Gastrocnemius medialis (tissue), 4 donors: ENCODE measurements at regions of chr19 and their contacts with region 1.

Region 1: GRCh38 chr19:51926784-51927742 is at the start of gene ZNF613:
- DNase-seq: peak; percentile 78 to 83
- ATAC-seq: peak; percentile 95
- H3K4me3 ChIP-seq: peak within 1 kb of the TSS; percentile 73 to 95 (median 88)
- H3K27ac ChIP-seq: peak within 1 kb of the TSS; percentile 76 to 91 (median 86)
- H3K4me1 ChIP-seq: peaks cover 5 to 11% of the 10 kb centered on the region in 2 donors
- H3K27me3 ChIP-seq: no peaks in the 10 kb centered on the region
- CTCF ChIP-seq: peak in 2 of 5 experiments; percentile 35
- POLR2A ChIP-seq: no peak
- total RNA-seq, gene ZNF613: 1.3 to 9.4 (median 3.8) TPM

Region 2: GRCh38 chr19:51887522-51888498 is 39.3 kb before region 1 on chr19 and contains the start of gene ZNF577:
- in situ Hi-C with region 1: no loop called
- intact Hi-C with region 1: loop called (anchors 1 kb)
- DNase-seq: peak; percentile 81 to 86
- ATAC-seq: peak; percentile 98
- H3K4me3 ChIP-seq: peak within 1 kb of the TSS; percentile 59 to 95 (median 84)
- H3K27ac ChIP-seq: peak within 1 kb of the TSS; percentile 70 to 87 (median 82)
- H3K4me1 ChIP-seq: peaks cover 4 to 9% of the 10 kb centered on the region in 2 donors
- H3K27me3 ChIP-seq: no peaks in the 10 kb centered on the region
- CTCF ChIP-seq: peak in 1 of 5 experiments; percentile 20
- POLR2A ChIP-seq: no peak
- total RNA-seq, gene ZNF577: 2.0 to 8.4 (median 4.5) TPM

Region 3: DNA sequence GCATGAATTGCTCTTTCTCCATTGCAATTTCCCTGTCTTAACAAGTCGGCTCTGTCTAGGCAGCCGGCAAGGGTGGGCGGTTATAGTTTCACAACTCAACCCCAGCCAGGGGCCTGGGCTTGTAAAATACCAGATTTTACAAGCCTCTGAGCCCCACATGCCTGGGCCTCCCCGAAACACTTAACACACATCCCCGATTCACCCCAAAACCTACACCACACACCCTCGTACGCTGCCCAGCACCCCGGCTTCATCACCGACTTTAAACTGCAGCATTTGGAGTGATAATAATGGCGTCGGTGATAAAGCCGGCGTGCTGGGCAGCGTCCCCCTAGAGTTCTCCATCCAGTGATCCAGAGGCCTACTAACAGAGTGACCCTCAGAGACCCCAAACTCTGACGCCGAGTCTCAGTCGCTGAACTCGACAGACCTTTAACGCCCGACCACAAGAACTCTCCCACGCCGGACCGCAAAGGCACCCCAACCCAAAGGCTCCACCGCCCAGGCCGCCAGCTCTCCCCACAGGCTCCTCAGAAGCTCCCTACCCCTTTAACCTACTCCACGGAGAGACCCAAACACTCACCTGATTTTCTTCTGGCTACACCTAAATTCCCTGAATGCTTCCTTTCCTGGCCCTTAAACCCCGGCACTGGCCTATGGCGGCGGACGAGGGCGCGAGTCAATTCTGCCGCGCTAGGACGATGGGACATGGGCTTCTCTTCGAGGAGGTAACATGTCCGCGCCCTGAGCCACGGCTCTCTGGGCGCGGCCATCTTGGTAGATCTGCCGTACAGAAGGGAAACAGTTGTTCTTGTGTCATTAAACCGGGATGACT is 22.5 kb before region 1 on chr19 and contains the start of gene ZNF649:
- in situ Hi-C with region 1: no loop called
- intact Hi-C with region 1: loop called (anchors 1 kb)
- DNase-seq: peak; percentile 59 to 79
- ATAC-seq: peak; percentile 99 to 100
- H3K4me3 ChIP-seq: peak within 1 kb of the TSS; percentile 71 to 86 (median 78)
- H3K27ac ChIP-seq: peak within 1 kb of the TSS; percentile 80 to 92 (median 85)
- H3K4me1 ChIP-seq: peaks cover 10 to 15% of the 10 kb centered on the region in 2 donors
- H3K27me3 ChIP-seq: peaks cover 0 to 9% (median 5%) of the 10 kb centered on the region in 3 donors
- CTCF ChIP-seq: no peak
- POLR2A ChIP-seq: no peak
- total RNA-seq, gene ZNF649: 2.6 to 4.7 (median 4.1) TPM

Region 4: DNA sequence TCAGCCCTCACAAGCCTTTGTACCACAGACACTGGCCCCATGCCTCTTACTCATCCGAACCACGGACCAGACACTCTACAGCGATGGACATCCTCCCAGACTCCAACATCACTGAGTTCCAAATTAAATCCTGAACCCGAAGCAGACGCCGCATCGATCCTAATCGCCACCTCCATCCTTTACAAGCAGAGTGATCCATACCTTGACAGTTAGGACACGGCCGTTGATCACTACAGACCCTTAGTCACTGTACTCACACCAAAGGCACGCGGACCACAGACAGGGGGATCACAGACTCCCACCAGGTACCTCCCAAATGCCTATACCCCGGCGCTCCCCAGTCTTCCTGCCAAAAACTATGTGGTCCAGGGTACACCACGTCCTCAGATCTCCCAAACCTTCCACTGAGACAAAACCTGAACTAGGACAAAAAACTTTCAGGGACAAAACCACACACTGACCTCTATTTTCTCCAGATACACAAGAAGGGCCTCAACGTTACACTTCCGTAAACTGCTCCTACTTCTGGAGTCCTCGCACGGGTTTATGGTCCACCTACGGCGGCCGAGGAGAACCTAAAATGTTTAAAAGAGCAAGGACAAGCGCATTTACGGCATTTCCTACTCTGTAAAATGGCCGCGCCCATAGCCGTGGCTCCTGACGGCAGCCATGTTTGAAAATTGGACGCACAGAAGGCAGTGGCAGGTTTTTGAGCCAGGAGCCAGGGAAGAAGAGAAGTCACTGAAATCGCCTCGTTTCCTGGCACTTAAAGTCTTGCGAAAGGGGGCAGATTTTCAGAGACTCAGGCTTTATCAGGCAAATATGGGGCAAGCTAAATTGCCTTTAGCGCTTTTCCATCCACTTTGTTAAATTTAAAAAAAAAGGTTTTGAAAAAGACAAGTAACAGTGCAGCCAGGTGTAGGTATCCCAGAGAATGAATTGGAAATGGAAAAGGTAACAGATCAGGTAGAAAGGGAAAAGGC is 59.5 kb after region 1 on chr19 and contains the start of gene ZNF350:
- in situ Hi-C with region 1: no loop called
- intact Hi-C with region 1: loop called (anchors 1 kb)
- DNase-seq: peak; percentile 87 to 91
- ATAC-seq: peak; percentile 100
- H3K4me3 ChIP-seq: peak within 1 kb of the TSS; percentile 69 to 92 (median 86)
- H3K27ac ChIP-seq: peak within 1 kb of the TSS; percentile 74 to 79 (median 77)
- H3K4me1 ChIP-seq: peaks cover 8 to 9% of the 10 kb centered on the region in 2 donors
- H3K27me3 ChIP-seq: no peaks in the 10 kb centered on the region
- CTCF ChIP-seq: no peak
- POLR2A ChIP-seq: peak in 1 of 2 donors; percentile 21
- total RNA-seq, gene ZNF350: 1.7 to 6.0 (median 5.0) TPM

Region 5: DNA sequence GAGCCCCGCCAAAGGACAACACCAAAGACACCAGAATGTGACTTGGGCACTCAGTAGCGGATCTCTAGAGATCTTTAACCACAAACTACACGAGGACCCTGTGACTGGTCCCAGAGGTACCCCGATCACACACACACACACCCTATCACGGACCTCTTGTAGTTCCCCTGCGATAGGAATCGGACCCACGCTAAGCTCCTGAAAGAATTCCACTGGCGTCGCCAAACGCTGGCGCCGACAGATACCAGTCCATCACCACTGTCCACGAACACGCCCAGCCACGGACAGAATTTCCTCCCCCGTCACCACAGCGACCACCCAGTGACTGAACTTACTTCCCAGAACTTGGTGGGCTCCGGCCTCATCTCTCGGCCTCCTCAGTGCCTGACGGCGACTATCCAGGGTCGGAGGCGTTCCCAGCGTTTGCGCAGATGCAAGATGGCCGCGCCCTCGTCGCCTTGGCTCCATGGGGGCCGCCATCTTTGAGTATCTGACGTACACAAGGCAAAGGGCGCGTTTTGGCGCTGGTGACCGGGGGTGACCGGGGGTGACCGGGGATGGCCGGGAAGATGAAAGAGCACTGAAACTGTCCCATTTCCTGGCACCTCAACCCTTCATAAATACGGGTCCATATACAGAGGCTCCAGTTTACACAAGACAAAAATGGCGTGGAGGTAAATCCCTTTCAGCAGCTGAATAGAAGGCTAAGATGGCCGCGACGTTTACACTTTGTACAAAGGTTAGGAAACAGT is 80.9 kb after region 1 on chr19 and contains the start of gene ZNF615:
- in situ Hi-C with region 1: no loop called
- intact Hi-C with region 1: loop called (anchors 1 kb)
- DNase-seq: peak; percentile 77 to 81
- ATAC-seq: peak; percentile 94 to 98
- H3K4me3 ChIP-seq: peak within 1 kb of the TSS; percentile 82 to 97 (median 88)
- H3K27ac ChIP-seq: peak within 1 kb of the TSS; percentile 75 to 86 (median 82)
- H3K4me1 ChIP-seq: peaks cover 0 to 5% of the 10 kb centered on the region in 2 donors
- H3K27me3 ChIP-seq: no peaks in the 10 kb centered on the region
- CTCF ChIP-seq: no peak
- POLR2A ChIP-seq: peak; percentile 10 to 14
- total RNA-seq, gene ZNF615: 5.6 to 8.9 (median 7.4) TPM